ENCODE measurements at regions of chr1 and their contacts with region 1.

Region 1: GRCh38 chr1:233904633-233905415 is at the start of gene SLC35F3:
- DNase-seq: peak; percentile 53
- ATAC-seq: peak; percentile 83
- H3K4me3 ChIP-seq: peak within 1 kb of the TSS; percentile 65 to 80
- H3K27ac ChIP-seq: peak within 1 kb of the TSS; percentile 34; the same call in 1 of the 2 replicates
- H3K4me1 ChIP-seq: peaks cover 23 to 55% of the 10 kb centered on the region in 2 experiments
- H3K27me3 ChIP-seq: no peaks in the 10 kb centered on the region
- CTCF ChIP-seq: peak in 2 of 3 experiments; percentile 25 to 57; a peak in 2 of 6 replicates
- POLR2A ChIP-seq: no peak
- RAD21 ChIP-seq: peak; percentile 61
- total RNA-seq, gene SLC35F3: 6.4 TPM

Region 2: GRCh38 chr1:233295237-233295974 is 609.4 kb before region 1 on chr1 and contains the start of gene PCNX2:
- CTCF ChIA-PET with region 1: no interaction called
- POLR2A ChIA-PET with region 1: no interaction called
- RAD21 ChIA-PET with region 1: no interaction called
- intact Hi-C with region 1: loop called (anchors 10 kb)
- DNase-seq: peak; percentile 33
- ATAC-seq: peak; percentile 95
- H3K4me3 ChIP-seq: peak within 1 kb of the TSS; percentile 79 to 80
- H3K27ac ChIP-seq: peak within 1 kb of the TSS; percentile 65
- H3K4me1 ChIP-seq: peaks cover 18 to 43% of the 10 kb centered on the region in 2 experiments; a peak in 3 of 4 replicates
- H3K27me3 ChIP-seq: no peaks in the 10 kb centered on the region
- CTCF ChIP-seq: no peak
- POLR2A ChIP-seq: peak; percentile 54
- RAD21 ChIP-seq: no peak
- total RNA-seq, gene PCNX2: 15.3 TPM

Region 3: GRCh38 chr1:233394860-233395717 is 509.7 kb before region 1 on chr1:
- CTCF ChIA-PET with region 1: no interaction called
- POLR2A ChIA-PET with region 1: no interaction called
- RAD21 ChIA-PET with region 1: no interaction called
- intact Hi-C with region 1: loop called (anchors 5 kb)
- DNase-seq: peak; percentile 54
- ATAC-seq: peak; percentile 97
- H3K4me3 ChIP-seq: no peak overlapping the region
- H3K27ac ChIP-seq: no peak overlapping the region
- H3K4me1 ChIP-seq: no peaks in the 10 kb centered on the region
- H3K27me3 ChIP-seq: no peaks in the 10 kb centered on the region
- CTCF ChIP-seq: peak; percentile 86 to 92 (median 86); a peak in 5 of 6 replicates
- POLR2A ChIP-seq: no peak
- RAD21 ChIP-seq: peak; percentile 93

Region 4: DNA sequence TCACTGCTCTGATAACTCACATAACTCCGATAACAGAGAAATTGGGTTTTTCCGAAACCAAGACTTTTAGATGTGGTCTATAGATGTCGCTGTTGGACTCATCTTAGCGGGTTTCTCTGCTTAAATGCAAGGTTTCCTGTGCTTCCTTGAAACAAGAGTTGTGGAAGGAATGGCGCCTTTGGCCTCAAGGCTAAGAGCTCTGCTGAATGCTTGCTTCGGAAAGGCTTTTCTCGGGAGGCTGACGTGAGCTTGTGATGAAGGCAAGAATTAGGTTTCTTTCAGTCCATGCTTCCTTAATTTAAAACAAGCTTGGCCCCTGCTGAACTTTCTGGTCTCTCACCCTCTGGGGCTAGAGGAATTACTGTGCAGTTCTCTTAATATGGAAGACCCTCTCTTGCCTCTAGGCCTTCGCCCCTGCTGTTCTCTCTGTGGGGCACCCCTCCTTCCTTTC is 463.8 kb before region 1 on chr1:
- CTCF ChIA-PET with region 1: interaction called, 12 read pairs
- POLR2A ChIA-PET with region 1: no interaction called
- RAD21 ChIA-PET with region 1: no interaction called
- intact Hi-C with region 1: loop called (anchors 2 kb)
- DNase-seq: peak; percentile 71
- ATAC-seq: peak; percentile 83
- H3K4me3 ChIP-seq: no peak overlapping the region
- H3K27ac ChIP-seq: no peak overlapping the region
- H3K4me1 ChIP-seq: peaks cover 0 to 14% of the 10 kb centered on the region in 2 experiments; a peak in 2 of 4 replicates
- H3K27me3 ChIP-seq: no peaks in the 10 kb centered on the region
- CTCF ChIP-seq: peak; percentile 69 to 81 (median 78)
- POLR2A ChIP-seq: no peak
- RAD21 ChIP-seq: peak; percentile 95

Region 5: GRCh38 chr1:233518349-233518748 is 386.5 kb before region 1 on chr1:
- CTCF ChIA-PET with region 1: no interaction called
- POLR2A ChIA-PET with region 1: no interaction called
- RAD21 ChIA-PET with region 1: no interaction called
- intact Hi-C with region 1: loop called (anchors 5 kb)
- DNase-seq: peak; percentile 65
- ATAC-seq: peak; percentile 78
- H3K4me3 ChIP-seq: peak overlapping the region; percentile 8 to 32; a peak in 1 of 4 replicates
- H3K27ac ChIP-seq: no peak overlapping the region
- H3K4me1 ChIP-seq: peaks cover 4 to 24% of the 10 kb centered on the region in 2 experiments; a peak in 2 of 4 replicates
- H3K27me3 ChIP-seq: no peaks in the 10 kb centered on the region
- CTCF ChIP-seq: peak; percentile 86 to 93 (median 90)
- POLR2A ChIP-seq: peak; percentile 40
- RAD21 ChIP-seq: peak; percentile 82

Region 6: DNA sequence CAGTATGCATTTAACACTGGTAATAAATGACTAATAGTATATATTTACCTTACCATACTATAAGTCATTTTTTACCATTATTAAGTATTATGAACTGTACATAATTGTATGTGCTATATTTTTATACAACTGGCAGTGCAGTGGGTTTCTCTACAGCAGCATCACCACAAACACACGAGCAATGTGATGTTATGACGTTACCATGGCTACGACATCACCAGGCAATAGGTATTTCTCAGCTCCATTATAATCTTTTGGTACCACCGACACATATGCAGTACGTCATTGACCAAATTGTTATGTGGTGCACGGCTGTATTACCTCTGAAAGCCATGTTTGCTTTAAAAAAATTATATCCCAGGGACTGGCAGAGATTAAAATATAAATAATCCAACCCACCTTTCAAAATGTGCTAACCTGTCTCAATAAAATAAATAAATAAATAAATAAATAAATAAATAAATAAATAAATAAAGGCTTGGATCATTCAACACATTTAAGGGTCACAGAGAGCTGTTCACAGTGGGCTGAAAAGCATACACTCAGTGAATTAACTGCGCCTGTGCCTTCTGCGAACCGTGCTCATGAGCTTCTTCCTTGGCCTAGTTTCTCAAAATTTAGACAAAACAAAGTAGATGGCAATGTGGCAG is 121.8 kb before region 1 on chr1:
- CTCF ChIA-PET with region 1: no interaction called
- POLR2A ChIA-PET with region 1: no interaction called
- RAD21 ChIA-PET with region 1: no interaction called
- intact Hi-C with region 1: no loop called
- DNase-seq: no peak
- ATAC-seq: no peak
- H3K4me3 ChIP-seq: no peak overlapping the region
- H3K27ac ChIP-seq: no peak overlapping the region
- H3K4me1 ChIP-seq: no peaks in the 10 kb centered on the region
- H3K27me3 ChIP-seq: no peaks in the 10 kb centered on the region
- CTCF ChIP-seq: no peak
- POLR2A ChIP-seq: no peak
- RAD21 ChIP-seq: no peak

Region 7: GRCh38 chr1:233993651-233994050 is 88.8 kb after region 1 on chr1:
- CTCF ChIA-PET with region 1: no interaction called
- POLR2A ChIA-PET with region 1: no interaction called
- RAD21 ChIA-PET with region 1: no interaction called
- intact Hi-C with region 1: loop called (anchors 5 kb)
- DNase-seq: peak; percentile 91
- ATAC-seq: peak; percentile 89
- H3K4me3 ChIP-seq: peak overlapping the region in 1 of 2 experiments; percentile 28; a peak in 2 of 4 replicates
- H3K27ac ChIP-seq: peak overlapping the region; percentile 28; the same call in 1 of the 2 replicates
- H3K4me1 ChIP-seq: peaks cover 9 to 49% of the 10 kb centered on the region in 2 experiments; a peak in 3 of 4 replicates
- H3K27me3 ChIP-seq: no peaks in the 10 kb centered on the region
- CTCF ChIP-seq: no peak
- POLR2A ChIP-seq: no peak
- RAD21 ChIP-seq: peak; percentile 27; the same call in 1 of the 2 replicates

Region 8: GRCh38 chr1:234065794-234066447 is 161.1 kb after region 1 on chr1:
- CTCF ChIA-PET with region 1: interaction called, 4 read pairs
- POLR2A ChIA-PET with region 1: no interaction called
- RAD21 ChIA-PET with region 1: interaction called, 3 to 5 read pairs
- intact Hi-C with region 1: loop called (anchors 5 kb)
- DNase-seq: peak; percentile 58
- ATAC-seq: peak; percentile 97
- H3K4me3 ChIP-seq: no peak overlapping the region
- H3K27ac ChIP-seq: no peak overlapping the region
- H3K4me1 ChIP-seq: no peaks in the 10 kb centered on the region
- H3K27me3 ChIP-seq: no peaks in the 10 kb centered on the region
- CTCF ChIP-seq: peak; percentile 75 to 81 (median 76)
- POLR2A ChIP-seq: no peak
- RAD21 ChIP-seq: peak; percentile 91

Measured in HCT116 (cell line).